G401 (cell line): ENCODE measurements at regions of chr17 and their contacts with region 1.

Region 1: DNA sequence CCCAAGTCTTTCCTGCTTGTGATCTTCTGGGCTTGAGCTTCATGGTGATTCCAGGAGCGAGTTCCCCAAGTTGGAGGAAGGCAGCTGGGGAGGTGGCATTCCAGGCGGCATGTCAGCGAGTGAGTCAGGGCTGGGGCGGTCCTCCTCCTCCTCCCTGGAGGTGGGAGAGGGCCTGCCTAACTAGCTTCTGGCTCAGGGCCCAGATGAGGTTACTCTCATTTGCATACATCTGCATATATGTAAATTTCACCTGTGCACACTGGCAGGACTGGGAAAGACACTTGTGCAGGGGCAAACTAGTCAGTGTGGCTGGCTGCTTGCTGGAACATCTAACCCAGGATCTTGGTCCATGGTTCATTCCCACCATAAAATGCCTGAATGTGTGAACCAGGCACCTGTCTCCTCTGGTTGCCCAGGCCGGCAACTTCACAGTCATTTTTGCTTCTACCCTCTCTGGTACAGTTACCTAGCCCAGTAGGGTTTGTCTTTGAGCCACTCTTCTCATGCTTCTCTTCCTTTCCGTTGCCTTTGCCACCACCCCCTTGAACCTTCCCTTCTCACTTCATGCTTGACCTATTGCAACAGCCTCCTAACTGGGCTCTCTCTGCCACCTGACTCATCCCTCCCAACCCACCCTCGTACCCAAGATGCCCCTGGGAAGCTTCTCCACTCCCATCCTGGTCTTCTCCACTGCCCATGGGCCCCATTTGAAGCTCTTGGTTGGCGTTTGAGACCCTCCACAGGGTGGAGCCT is 9.6 kb upstream of the DLX4 start:
- DNase-seq: no peak

Region 2: GRCh38 chr17:49887086-49888028 is 72.0 kb before region 1 on chr17:
- in situ Hi-C with region 1: loop called (anchors 5 kb)
- DNase-seq: peak; percentile 16